Activated naive CD4-positive, alpha-beta T cell treated with anti-CD3 and anti-CD28 coated beads for 36 hours (primary cell): ENCODE measurements at regions of chr15 and their contacts with region 1.

Region 1: GRCh38 chr15:70097337-70098169 is at the start of gene TLE3:
- DNase-seq: peak; percentile 98
- H3K4me3 Mint-ChIP-seq: peak within 1 kb of the TSS; percentile 99
- H3K27ac Mint-ChIP-seq: peak within 1 kb of the TSS; percentile 99
- H3K4me1 Mint-ChIP-seq: peaks cover 37% of the 10 kb centered on the region
- H3K27me3 Mint-ChIP-seq: peaks cover 2% of the 10 kb centered on the region
- total RNA-seq, gene TLE3: 105 to 109 TPM

Region 2: GRCh38 chr15:69468241-69469121 is 629.1 kb before region 1 on chr15:
- CTCF ChIA-PET with region 1: interaction called, 4 read pairs
- intact Hi-C with region 1: loop called (anchors 2 kb)
- DNase-seq: peak; percentile 89
- H3K4me3 Mint-ChIP-seq: peak overlapping the region; percentile 25
- H3K27ac Mint-ChIP-seq: peak overlapping the region; percentile 75
- H3K4me1 Mint-ChIP-seq: peaks cover 27% of the 10 kb centered on the region
- H3K27me3 Mint-ChIP-seq: no peaks in the 10 kb centered on the region

Region 3: GRCh38 chr15:69719527-69720240 is 377.9 kb before region 1 on chr15:
- CTCF ChIA-PET with region 1: no interaction called
- intact Hi-C with region 1: loop called (anchors 1 kb)
- DNase-seq: peak; percentile 78
- H3K4me3 Mint-ChIP-seq: no peak overlapping the region
- H3K27ac Mint-ChIP-seq: peak overlapping the region; percentile 33
- H3K4me1 Mint-ChIP-seq: peaks cover 79% of the 10 kb centered on the region
- H3K27me3 Mint-ChIP-seq: no peaks in the 10 kb centered on the region

Region 4: GRCh38 chr15:69760890-69761568 is 336.5 kb before region 1 on chr15:
- CTCF ChIA-PET with region 1: interaction called, 4 read pairs
- intact Hi-C with region 1: loop called (anchors 1 kb)
- DNase-seq: peak; percentile 93
- H3K4me3 Mint-ChIP-seq: peak overlapping the region; percentile 20
- H3K27ac Mint-ChIP-seq: peak overlapping the region; percentile 97
- H3K4me1 Mint-ChIP-seq: peaks cover 74% of the 10 kb centered on the region
- H3K27me3 Mint-ChIP-seq: peaks cover 2% of the 10 kb centered on the region

Region 5: DNA sequence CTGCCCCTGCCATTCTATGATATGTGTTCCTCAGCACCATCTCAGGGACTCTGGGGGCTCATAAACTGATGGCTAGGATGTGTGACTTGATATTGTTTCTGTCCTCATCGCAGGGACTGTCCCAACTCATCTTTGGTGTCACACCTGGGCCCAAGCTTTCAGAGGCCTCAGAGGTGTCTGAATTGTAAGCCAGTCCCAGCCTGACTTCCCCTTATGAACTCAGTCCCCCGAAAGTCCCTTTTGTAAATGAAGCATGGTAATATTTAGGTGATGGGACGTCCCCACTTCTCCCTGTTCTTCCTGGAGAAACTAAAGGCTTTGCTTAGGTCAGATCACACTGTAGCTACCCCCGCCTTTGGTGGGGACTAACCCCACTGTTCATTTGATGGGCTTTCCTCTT is 142.5 kb after region 1 on chr15:
- CTCF ChIA-PET with region 1: no interaction called
- intact Hi-C with region 1: loop called (anchors 2 kb)
- DNase-seq: peak; percentile 84
- H3K4me3 Mint-ChIP-seq: no peak overlapping the region
- H3K27ac Mint-ChIP-seq: no peak overlapping the region
- H3K4me1 Mint-ChIP-seq: peaks cover 56% of the 10 kb centered on the region
- H3K27me3 Mint-ChIP-seq: peaks cover 2% of the 10 kb centered on the region

Region 6: DNA sequence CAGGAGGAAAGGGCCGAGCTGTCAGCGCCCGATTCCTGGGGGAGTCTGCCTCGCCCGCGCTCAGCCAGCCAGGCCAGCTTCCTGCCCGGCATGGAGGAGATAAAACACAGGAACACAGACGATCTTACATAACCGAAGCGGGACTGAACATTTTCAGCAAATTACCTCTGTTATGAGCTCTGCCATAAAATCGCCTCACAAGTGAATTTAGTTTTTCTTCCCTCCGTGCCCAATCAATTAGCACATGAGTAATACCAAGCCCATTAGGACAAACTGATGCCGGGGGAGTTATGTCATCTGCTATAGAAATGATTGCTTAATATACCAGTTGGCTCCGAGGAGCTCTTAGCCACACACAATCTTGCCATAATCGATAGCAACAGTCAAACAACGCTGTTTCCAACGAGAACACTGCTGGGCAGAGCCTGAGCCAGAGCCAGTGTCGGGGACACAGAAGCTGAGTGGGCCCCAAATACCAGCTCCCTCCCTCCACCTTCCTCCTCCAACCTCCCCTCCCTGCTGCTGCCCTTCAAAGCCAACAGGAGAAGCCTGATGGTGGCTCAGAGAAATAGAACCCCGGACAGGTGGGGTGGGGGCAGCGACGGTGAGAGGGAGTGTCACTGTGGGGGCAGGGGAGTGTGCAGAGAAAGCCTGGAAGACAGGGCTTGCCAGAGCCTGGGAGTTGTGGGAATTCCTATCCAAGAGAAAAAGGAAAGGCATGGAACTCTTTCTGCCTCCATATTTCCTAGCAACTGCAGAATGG is 279.6 kb after region 1 on chr15:
- CTCF ChIA-PET with region 1: no interaction called
- intact Hi-C with region 1: no loop called
- DNase-seq: no peak
- H3K4me3 Mint-ChIP-seq: no peak overlapping the region
- H3K27ac Mint-ChIP-seq: no peak overlapping the region
- H3K4me1 Mint-ChIP-seq: no peaks in the 10 kb centered on the region
- H3K27me3 Mint-ChIP-seq: peaks cover 5% of the 10 kb centered on the region

Region 7: GRCh38 chr15:70504299-70504951 is 406.9 kb after region 1 on chr15:
- CTCF ChIA-PET with region 1: no interaction called
- intact Hi-C with region 1: loop called (anchors 5 kb)
- DNase-seq: peak; percentile 81
- H3K4me3 Mint-ChIP-seq: peak overlapping the region; percentile 27
- H3K27ac Mint-ChIP-seq: peak overlapping the region; percentile 79
- H3K4me1 Mint-ChIP-seq: peaks cover 85% of the 10 kb centered on the region
- H3K27me3 Mint-ChIP-seq: no peaks in the 10 kb centered on the region